ENCODE measurements at regions of chr2 and their contacts with region 1.

Region 1: GRCh38 chr2:176001916-176002687 is at the start of gene LNPK:
- DNase-seq: peak; percentile 90 to 98
- H3K4me3 ChIP-seq: peak within 1 kb of the TSS; percentile 82
- H3K27ac ChIP-seq: peak within 1 kb of the TSS; percentile 37
- H3K4me1 ChIP-seq: peaks cover 16% of the 10 kb centered on the region
- H3K27me3 ChIP-seq: no peaks in the 10 kb centered on the region
- CTCF ChIP-seq: no peak
- total RNA-seq, gene LNPK: 24.8 and 43.8 TPM in 2 replicates

Region 2: DNA sequence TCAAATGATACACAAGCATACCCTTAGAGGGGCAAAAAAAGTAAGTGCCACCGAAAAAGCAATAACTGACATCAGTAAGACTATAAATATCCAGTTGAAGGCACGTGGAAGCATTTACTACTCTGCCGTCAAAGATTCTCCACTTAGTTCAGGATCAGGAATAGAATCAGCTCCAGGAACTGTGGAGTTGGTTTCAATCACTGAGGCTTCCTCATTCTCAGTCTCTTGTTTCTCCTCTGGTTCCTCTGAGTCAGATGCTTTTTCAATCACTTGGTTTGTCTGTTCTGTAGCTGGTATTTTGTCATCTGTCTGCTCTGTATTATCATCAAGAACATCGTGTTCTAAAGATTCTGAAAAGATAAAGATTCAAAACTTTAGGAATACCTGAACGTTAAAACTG is 72.3 kb before region 1 on chr2:
- CTCF ChIA-PET with region 1: no interaction called
- POLR2A ChIA-PET with region 1: no interaction called
- intact Hi-C with region 1: loop called (anchors 1 kb)
- DNase-seq: peak; percentile 14 to 39
- H3K4me3 ChIP-seq: no peak overlapping the region
- H3K27ac ChIP-seq: no peak overlapping the region
- H3K4me1 ChIP-seq: peaks cover 18% of the 10 kb centered on the region
- H3K27me3 ChIP-seq: no peaks in the 10 kb centered on the region
- CTCF ChIP-seq: no peak

Region 3: GRCh38 chr2:176079831-176080539 is 77.9 kb after region 1 on chr2:
- CTCF ChIA-PET with region 1: no interaction called
- POLR2A ChIA-PET with region 1: no interaction called
- intact Hi-C with region 1: no loop called
- DNase-seq: no peak
- H3K4me3 ChIP-seq: no peak overlapping the region
- H3K27ac ChIP-seq: no peak overlapping the region
- H3K4me1 ChIP-seq: no peaks in the 10 kb centered on the region
- H3K27me3 ChIP-seq: peaks cover 42% of the 10 kb centered on the region
- CTCF ChIP-seq: peak; percentile 30; the same call in 1 of the 2 replicates

Region 4: GRCh38 chr2:176643646-176644045 is 641.5 kb after region 1 on chr2:
- CTCF ChIA-PET with region 1: no interaction called
- POLR2A ChIA-PET with region 1: no interaction called
- intact Hi-C with region 1: loop called (anchors 10 kb)
- DNase-seq: no peak
- H3K4me3 ChIP-seq: no peak overlapping the region
- H3K27ac ChIP-seq: no peak overlapping the region
- H3K4me1 ChIP-seq: no peaks in the 10 kb centered on the region
- H3K27me3 ChIP-seq: peaks cover 20% of the 10 kb centered on the region; the same call in 1 of the 2 replicates
- CTCF ChIP-seq: no peak

Measured in PC-9 (cell line).